Activated naive CD8-positive, alpha-beta T cell treated with anti-CD3 and anti-CD28 coated beads, Interleukin-2, amount 10 ng/mL, durations not matched to agents 7 days and 5 days (primary cell): ENCODE measurements at regions of chr16 and their contacts with region 1.

Region 1: DNA sequence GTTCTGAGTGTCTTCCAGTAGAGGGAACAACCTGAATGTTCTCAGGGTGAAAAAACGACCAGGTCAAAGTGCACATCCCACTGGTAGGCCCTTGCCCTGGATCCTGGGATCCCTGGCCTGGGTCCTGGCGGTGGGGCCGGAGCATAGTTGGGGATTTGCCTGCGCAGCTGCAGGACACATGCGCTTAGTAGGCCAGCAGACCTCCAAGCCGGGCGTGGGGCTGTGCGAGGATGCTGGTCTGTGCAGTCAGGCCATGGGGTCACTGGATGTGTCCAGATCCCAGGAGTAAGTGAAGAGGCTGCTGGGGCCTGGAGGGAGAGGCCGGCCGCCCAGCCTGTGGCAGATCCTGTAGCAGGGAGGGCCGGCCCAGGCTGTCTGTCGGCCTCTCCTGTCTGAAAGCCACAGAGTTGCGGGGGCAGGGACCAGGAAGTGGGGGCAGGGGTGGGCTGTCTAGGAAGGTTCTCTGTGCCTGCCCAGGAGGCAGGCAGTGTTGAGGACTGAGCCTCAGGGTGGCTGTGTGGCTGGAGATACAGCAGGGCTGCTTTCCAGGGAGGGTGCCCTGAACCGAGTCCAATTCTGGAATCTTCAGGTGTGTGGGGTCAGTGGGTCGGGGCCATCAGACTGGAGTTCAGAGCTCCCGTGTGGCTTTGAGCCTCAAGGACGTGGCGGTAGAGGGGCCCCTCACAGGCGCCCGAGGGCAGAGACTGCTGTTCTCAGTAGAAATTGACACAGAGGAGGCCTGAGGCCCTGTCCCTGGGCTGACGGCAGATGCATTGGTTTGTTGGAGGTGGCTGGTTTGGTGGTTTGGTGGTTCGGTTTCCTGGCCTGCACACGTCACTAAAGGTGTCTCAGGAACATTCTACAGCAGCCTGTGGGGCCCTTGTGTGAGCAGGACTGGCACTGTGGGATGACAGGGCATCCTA is 17.2 kb upstream of the NUDT16L1 start:
- DNase-seq: peak; percentile 84
- ATAC-seq: peak; percentile 83
- H3K4me3 Mint-ChIP-seq: peak overlapping the region; percentile 81
- H3K27ac Mint-ChIP-seq: peak overlapping the region; percentile 98
- H3K4me1 Mint-ChIP-seq: peaks cover 31% of the 10 kb centered on the region
- H3K27me3 Mint-ChIP-seq: no peaks in the 10 kb centered on the region

Region 2: GRCh38 chr16:4556112-4556511 is 120.0 kb before region 1 on chr16 and contains the start of gene C16orf96:
- POLR2A ChIA-PET with region 1: no interaction called
- DNase-seq: no peak
- ATAC-seq: no peak
- H3K4me3 Mint-ChIP-seq: no peak within 1 kb of the TSS
- H3K27ac Mint-ChIP-seq: no peak within 1 kb of the TSS
- H3K4me1 Mint-ChIP-seq: no peaks in the 10 kb centered on the region
- H3K27me3 Mint-ChIP-seq: peaks cover 10% of the 10 kb centered on the region
- total RNA-seq, gene C16orf96: 0.08 to 0.17 TPM

Region 3: GRCh38 chr16:4664538-4665418 is 11.3 kb before region 1 on chr16:
- POLR2A ChIA-PET with region 1: interaction called, 10 read pairs
- DNase-seq: peak; percentile 79
- ATAC-seq: peak; percentile 72
- H3K4me3 Mint-ChIP-seq: peak overlapping the region; percentile 70
- H3K27ac Mint-ChIP-seq: peak overlapping the region; percentile 95
- H3K4me1 Mint-ChIP-seq: peaks cover 43% of the 10 kb centered on the region
- H3K27me3 Mint-ChIP-seq: no peaks in the 10 kb centered on the region